ENCODE measurements at regions of chr7 and their contacts with region 1.

Region 1: DNA sequence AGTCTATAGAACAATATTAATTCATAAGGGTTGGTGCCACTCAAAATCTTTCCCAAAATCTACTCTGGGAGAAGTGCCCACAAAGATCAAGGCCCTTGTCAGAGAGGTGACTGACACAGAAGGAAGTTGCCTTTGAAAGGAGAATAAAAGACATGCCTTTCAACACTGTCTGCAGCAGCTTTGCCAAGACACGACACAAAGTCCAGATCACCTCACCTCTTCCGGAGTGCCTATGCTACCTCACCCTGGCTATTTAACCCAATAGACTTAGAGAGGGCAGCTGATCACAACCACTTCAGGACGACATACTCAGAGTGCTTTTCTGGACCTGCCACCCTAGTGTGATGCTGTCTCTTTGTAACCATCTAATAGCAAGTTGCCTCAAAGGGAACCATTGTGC is 49.0 kb upstream of the YAE1 start:
- DNase-seq: no peak
- ATAC-seq: no peak
- H3K4me3 Mint-ChIP-seq: no peak overlapping the region
- H3K27ac Mint-ChIP-seq: no peak overlapping the region
- H3K4me1 Mint-ChIP-seq: no peaks in the 10 kb centered on the region
- H3K27me3 Mint-ChIP-seq: peaks cover 1% of the 10 kb centered on the region

Region 2: DNA sequence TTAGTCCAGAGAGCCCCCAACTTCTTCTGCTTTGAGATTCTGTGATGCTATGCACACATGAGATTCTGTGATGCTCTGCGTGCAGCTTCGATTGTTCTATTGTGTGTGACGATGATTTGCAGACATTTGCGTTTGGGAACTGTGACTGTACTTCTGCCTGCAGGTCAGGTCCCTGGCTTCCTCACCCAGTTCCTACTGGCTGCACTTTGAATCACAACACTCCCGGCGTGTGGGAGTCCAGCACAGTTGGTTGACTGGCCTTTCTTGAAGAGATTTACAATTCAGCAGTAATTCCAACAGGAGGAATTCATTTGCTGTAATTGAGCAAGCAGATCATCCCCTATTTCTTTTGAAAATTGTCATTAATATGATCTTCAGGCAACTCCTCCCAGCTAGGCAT is 203.3 kb before region 1 on chr7:
- CTCF ChIA-PET with region 1: no interaction called
- POLR2A ChIA-PET with region 1: no interaction called
- intact Hi-C with region 1: no loop called
- DNase-seq: no peak
- ATAC-seq: no peak
- H3K4me3 Mint-ChIP-seq: no peak overlapping the region
- H3K27ac Mint-ChIP-seq: no peak overlapping the region
- H3K4me1 Mint-ChIP-seq: no peaks in the 10 kb centered on the region
- H3K27me3 Mint-ChIP-seq: peaks cover 6% of the 10 kb centered on the region

Region 3: DNA sequence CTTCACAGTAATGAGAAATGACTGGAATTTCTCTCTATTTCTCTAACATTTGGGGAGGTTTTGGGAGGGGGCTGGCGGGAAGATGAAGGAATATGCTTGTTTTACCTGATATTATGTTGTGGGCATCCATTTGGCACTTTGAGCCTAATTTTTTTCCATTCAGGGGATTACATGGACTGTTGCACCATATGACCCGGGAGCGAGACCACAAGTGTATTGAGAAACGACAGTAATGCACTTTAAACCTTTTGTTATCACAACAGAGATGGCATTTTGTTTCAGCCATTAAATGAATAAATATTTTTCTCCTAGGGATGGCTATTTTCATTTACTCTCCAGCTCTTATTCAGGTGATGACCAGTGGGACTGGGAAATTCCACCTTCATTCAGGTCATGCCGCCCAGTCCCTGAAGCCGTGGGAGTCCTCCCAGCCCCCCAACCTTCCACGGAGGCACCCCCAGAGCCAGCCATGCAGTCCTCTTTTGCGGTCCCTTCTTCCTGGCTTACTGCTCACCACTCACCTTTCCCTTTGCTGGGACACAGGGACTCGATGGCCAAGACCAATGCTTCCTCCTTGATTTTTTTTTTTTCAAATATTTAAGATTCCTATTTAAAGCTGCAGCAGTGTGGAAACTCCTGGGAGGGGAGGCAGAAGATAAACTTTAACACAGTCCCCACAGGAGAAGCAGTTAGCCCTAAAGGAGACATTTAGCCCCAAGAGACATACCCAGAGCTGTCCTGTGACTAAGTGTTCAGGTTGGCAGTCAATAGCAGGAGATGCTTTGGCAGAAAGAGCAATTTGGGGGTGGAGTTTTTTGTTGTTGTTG is 142.0 kb before region 1 on chr7:
- CTCF ChIA-PET with region 1: no interaction called
- POLR2A ChIA-PET with region 1: no interaction called
- intact Hi-C with region 1: no loop called
- DNase-seq: no peak
- ATAC-seq: no peak
- H3K4me3 Mint-ChIP-seq: no peak overlapping the region
- H3K27ac Mint-ChIP-seq: no peak overlapping the region
- H3K4me1 Mint-ChIP-seq: no peaks in the 10 kb centered on the region
- H3K27me3 Mint-ChIP-seq: no peaks in the 10 kb centered on the region

Region 4: DNA sequence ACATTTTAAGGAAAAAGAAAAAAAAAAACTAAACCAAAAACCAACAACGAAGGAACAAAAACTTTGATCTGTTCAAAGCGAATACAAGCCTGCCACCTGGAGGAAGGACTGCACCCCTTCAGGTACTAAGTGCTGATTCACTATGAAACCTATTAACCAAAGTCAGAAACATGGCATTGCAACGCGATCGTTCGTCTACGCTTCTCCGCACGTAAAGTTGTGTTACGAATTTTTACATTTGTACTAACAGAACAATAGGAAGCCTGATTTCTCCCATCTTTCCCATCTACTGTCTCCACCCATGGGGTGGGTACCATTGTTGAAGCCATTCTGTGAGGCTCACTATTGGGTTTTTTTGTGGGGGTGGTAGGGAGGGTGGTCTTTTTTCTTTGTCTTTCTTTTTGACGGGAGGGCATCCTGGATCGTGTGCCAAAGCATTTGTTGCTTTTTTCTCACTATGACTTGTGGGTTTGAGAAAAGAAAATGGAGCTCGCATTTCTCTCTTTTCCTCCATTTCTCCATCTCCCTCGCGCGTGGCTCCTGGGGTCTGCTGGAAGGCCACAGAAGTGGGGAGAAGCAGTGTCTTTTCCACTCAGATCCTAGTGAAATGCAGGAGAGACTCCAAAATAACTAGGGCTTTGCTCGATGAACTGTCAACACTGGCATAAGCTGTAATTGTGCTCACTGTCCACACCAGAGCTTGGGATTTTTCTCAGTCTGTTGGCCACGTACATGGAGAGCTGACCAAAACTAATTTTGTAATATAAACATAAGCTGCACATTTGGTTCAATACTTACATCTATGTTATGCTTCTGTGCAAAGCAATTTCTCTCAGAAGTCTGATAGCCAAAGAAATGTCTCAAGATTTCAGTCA is 51.9 kb before region 1 on chr7:
- CTCF ChIA-PET with region 1: interaction called, 4 read pairs
- POLR2A ChIA-PET with region 1: no interaction called
- intact Hi-C with region 1: loop called in 1 of 2 experiments (anchors 5 kb)
- DNase-seq: peak; percentile 68
- ATAC-seq: peak; percentile 86
- H3K4me3 Mint-ChIP-seq: no peak overlapping the region
- H3K27ac Mint-ChIP-seq: no peak overlapping the region
- H3K4me1 Mint-ChIP-seq: peaks cover 2% of the 10 kb centered on the region
- H3K27me3 Mint-ChIP-seq: peaks cover 7% of the 10 kb centered on the region

Measured in activated CD4-positive, alpha-beta T cell treated with anti-CD3 and anti-CD28 coated beads for 36 hours (primary cell).